ENCODE measurements at regions of chr2 and their contacts with region 1.

Region 1: DNA sequence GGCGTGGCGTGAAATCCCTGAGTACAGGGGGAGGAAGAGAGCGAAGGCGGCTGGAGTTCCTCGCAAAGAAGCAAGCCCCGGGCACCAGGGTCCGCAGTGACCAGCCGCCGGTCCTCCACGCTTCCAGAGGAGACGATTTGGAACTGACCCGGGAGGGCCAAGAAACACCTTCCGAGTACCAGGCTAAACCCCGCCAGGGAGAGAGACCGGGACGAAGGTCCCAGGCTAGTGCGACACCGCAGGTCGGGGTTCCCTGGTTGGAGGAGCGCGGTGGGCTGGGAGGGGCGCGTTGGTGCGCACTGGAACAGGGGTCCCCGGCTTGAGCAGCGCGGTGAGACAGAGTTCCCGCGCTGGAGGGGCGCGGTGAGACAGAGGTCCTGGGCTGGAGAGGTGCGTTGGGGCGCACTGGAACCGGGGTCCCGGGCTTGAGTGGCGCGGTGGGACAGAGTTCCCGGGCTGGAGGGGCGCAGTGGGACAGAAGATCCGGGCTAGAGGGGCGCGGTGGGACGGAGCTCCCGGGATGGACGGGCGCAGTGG is 901 bp downstream of the WDFY1 start:
- DNase-seq: no peak
- H3K4me3 ChIP-seq: peak overlapping the region; percentile 91
- H3K27ac ChIP-seq: peak overlapping the region; percentile 68
- H3K27me3 ChIP-seq: no peaks in the 10 kb centered on the region
- CTCF ChIP-seq: no peak

Region 2: GRCh38 chr2:223957092-223957851 is 13.0 kb after region 1 on chr2 and contains the start of gene MRPL44:
- CTCF ChIA-PET with region 1: interaction called, 3 read pairs
- POLR2A ChIA-PET with region 1: interaction called, 11 read pairs
- DNase-seq: peak; percentile 85
- H3K4me3 ChIP-seq: peak within 1 kb of the TSS; percentile 85
- H3K27ac ChIP-seq: peak within 1 kb of the TSS; percentile 57
- H3K27me3 ChIP-seq: no peaks in the 10 kb centered on the region
- CTCF ChIP-seq: no peak
- polyA plus RNA-seq, gene MRPL44: 22.0 and 24.3 TPM in 2 replicates

Measured in AG04450 (cell line).